ENCODE measurements at regions of chr2 and their contacts with region 1.

Region 1: GRCh38 chr2:45935791-45936622 is 284.5 kb downstream of the PRKCE start:
- DNase-seq: peak; percentile 69
- CTCF ChIP-seq: peak; percentile 76

Region 2: DNA sequence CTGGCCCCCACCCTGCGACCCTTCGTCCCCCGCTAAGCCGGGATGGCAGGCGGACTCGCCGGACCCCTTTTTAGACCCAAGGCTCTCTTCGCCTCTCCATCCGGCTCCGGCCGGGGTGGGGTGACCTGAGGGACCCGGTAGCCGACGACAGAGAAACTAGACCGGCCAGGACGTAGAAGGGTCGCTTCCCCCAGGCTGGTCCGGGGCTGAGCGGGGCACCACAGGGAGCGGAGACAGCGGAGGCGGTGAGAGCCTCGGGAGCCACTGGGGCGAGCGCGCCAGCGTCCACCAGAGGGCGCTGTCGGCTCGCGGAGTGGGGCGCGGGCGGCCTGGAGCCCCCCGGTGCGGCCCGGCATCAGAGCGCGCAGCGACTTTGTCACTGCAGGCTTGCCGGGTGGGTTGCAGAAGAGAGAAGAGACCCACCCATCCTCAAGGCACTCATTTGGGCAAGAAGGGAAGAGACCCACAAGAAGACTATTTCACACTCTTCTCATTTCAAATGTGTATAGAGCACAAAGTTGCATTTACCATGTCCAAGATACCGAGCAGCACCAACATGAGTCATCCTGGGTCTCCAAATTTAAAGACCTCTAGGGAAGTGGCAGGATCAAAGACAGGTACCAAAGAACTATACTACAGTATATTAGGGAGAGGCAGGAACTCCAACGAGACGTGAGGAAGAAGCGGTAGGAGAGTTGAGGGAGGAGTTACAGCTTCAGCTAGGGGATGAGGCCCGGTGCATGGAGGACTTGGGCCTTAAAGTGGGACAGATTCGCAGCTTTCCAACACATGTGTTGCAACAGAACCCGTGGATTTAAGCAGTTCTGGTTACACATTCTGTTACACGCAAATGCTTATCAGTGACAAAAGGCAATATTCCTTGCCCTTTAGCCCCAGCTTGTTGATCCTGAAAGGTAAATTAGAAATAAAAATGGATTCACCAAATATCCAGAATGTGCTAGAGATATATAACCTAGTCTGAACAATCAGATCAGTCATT is 292.2 kb before region 1 on chr2:
- in situ Hi-C with region 1: loop called (anchors 10 kb)
- DNase-seq: peak; percentile 90
- CTCF ChIP-seq: peak; percentile 97

Region 3: GRCh38 chr2:46230115-46230571 is 294.1 kb after region 1 on chr2:
- in situ Hi-C with region 1: no loop called
- DNase-seq: no peak
- CTCF ChIP-seq: peak; percentile 38

Measured in GM13977 (cell line).